Endothelial cell of umbilical vein (primary cell): ENCODE measurements at regions of chr5 and their contacts with region 1.

Region 1: GRCh38 chr5:14035859-14036440 is 91.5 kb upstream of the DNAH5 start:
- DNase-seq: peak; percentile 96
- H3K4me3 ChIP-seq: peak overlapping the region in 1 of 3 experiments; percentile 29
- H3K27ac ChIP-seq: peak overlapping the region; percentile 93
- H3K4me1 ChIP-seq: peaks cover 54% of the 10 kb centered on the region
- H3K27me3 ChIP-seq: no peaks in the 10 kb centered on the region
- CTCF ChIP-seq: no peak
- POLR2A ChIP-seq: no peak

Region 2: DNA sequence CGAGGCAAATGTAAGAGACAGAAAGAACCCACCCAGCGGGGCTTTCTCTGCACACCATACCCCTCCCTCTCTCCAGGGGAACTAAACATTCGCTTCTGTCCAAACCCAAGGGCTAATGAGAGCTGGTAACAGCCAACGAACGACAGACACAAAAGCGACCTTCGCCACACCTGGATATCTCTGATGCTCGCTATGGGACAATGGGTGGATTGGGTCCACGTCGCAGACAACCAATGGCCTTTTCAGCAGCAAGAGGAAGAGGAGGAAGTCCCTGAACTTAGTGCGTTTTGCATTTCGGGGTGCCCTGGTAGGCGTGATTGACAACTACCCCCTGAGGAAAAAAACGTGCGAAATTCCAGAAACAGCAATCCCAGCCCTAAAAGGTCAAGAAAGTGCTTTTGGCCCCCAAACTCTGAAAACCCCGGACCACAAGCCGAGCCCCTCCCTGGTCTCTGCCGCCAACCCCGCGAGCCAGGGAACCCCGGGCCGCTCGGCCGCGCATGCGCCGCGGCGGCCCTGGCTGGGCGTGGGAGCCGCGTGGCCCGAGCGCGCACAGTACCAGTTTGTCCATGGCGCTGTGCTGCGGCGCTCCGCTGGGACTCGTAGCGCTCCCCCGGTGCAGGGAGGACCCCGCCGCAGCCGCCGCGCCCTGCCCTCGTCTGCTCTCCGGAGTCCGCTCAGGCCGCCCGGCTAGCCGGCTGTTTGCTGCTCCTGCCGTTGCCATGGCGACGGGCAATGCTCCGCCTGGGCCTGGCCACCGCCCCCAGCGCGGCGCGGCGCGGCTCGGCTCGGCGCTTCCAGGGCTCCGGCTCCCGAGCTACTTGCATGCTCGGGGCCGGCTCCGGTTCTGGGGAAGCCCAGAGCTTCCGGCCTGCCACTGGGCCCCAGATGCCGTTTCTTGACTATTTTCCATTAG is 24.6 kb before region 1 on chr5:
- CTCF ChIA-PET with region 1: interaction called, 11 read pairs
- POLR2A ChIA-PET with region 1: interaction called, 3 read pairs
- dilution Hi-C with region 1: no loop called
- intact Hi-C with region 1: loop called (anchors 1 kb)
- DNase-seq: peak; percentile 89
- H3K4me3 ChIP-seq: peak overlapping the region; percentile 40 to 71 (median 58)
- H3K27ac ChIP-seq: peak overlapping the region; percentile 23
- H3K4me1 ChIP-seq: peaks cover 5% of the 10 kb centered on the region
- H3K27me3 ChIP-seq: no peaks in the 10 kb centered on the region
- CTCF ChIP-seq: no peak
- POLR2A ChIP-seq: no peak

Region 3: DNA sequence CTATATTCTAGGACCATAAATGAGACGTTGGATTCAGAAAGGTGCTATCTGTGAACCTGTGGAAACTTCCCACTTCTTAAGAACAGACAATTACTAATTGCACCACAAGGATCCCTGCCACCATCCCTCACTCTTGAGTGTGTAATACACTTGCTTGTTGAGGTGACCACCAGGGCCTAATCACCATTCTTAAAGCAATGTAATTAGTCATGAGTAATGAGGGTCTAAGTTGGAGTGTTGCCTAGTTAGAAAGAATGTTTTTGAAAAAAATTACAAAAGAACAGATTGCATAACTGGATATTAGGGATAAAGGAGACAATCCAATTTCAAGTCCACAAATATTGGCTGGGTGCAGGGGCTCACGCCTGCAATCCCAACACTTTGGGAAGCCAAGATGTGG is 50.3 kb after region 1 on chr5:
- CTCF ChIA-PET with region 1: no interaction called
- POLR2A ChIA-PET with region 1: no interaction called
- dilution Hi-C with region 1: no loop called
- intact Hi-C with region 1: no loop called
- DNase-seq: no peak
- H3K4me3 ChIP-seq: no peak overlapping the region
- H3K27ac ChIP-seq: no peak overlapping the region
- H3K4me1 ChIP-seq: no peaks in the 10 kb centered on the region
- H3K27me3 ChIP-seq: peaks cover 7 to 21% of the 10 kb centered on the region in 2 experiments
- CTCF ChIP-seq: no peak
- POLR2A ChIP-seq: no peak

Region 4: DNA sequence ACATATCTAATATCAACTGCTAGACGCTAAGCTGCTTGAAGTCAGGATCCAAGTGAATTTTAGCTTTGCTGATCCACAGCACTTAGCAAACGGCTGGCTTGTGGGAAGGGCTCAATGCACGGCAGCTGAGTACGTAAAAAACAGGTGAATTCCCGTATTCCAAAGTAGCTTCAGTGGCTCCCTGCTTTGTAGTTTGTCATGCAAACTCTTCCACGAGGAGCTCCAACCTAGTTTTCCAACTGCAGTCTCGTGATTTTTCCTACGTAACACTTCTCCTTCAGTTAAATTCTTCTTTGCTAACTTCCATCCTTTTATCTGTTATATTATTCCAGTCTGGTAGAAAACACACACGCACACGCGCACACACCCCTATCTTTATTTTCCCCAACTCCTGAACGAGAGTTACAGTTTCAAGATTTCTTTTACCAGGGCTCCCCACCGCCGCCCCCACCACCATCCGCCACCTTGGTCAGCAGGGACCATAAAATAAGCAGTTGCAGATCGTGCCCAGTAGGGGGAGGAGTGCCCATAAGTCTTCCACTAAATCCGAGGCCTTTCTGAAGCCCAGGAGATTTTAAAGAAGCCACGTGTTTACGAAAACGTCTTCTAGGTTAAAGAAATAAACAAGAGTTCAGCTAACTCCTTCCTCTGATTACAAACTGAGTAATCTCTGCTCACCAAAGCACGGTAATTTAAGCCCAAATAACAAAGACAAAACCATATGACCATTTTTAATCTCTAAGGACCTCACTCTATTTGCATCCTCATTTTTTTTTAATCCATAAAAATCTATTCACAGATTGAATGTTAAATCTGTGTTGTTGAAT is 72.4 kb after region 1 on chr5:
- CTCF ChIA-PET with region 1: interaction called, 3 read pairs
- POLR2A ChIA-PET with region 1: no interaction called
- dilution Hi-C with region 1: no loop called
- intact Hi-C with region 1: loop called (anchors 1 kb)
- DNase-seq: peak; percentile 77
- H3K4me3 ChIP-seq: peak overlapping the region in 2 of 3 experiments; percentile 5
- H3K27ac ChIP-seq: no peak overlapping the region
- H3K4me1 ChIP-seq: peaks cover 30% of the 10 kb centered on the region
- H3K27me3 ChIP-seq: no peaks in the 10 kb centered on the region
- CTCF ChIP-seq: peak; percentile 62 to 82
- POLR2A ChIP-seq: no peak

Region 5: DNA sequence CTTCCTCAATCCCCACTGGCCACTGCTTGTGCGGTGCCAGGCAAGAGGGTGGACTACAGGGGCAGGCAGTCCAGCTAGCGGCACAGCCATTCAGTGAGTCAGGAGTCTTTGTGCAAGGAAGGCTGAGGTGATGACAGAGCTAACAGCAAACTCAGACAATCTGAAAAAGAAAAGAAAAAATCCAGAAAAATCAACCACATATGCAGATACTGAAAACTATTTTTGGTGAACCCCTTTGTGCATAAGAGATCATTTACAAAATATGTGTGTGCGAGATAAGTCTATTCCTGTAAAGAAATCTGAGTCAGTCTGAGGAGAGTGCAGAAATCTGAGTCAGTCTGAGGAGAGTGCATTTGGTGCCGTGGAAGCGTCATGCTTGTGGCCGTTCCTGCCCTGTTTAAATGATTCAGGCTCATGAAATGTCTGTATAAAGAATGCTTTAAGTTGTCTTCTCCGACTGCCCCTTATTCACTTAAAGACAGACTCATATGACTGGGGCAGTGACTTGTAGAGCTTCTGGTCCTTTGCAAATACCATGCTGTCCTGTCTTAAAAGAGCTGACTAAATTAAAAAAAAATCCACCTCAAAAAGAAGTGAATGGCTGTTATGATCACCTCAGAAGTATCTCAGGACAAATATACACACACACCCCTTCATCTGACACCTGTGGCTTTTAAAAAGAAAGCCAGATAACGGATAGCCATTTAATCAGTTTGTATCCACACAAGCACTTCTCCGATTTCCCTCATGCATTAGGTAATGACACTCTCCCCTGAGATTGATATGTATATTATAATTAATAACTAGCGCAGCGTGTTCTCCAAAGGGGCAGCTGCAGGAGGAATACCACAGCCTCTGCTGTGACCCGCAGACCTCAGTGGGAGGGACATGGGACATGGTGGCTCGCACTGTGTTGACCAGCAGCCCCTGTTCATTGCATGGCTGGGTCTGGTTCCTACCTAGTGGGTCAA is 154.5 kb after region 1 on chr5:
- CTCF ChIA-PET with region 1: no interaction called
- POLR2A ChIA-PET with region 1: no interaction called
- dilution Hi-C with region 1: no loop called
- intact Hi-C with region 1: loop called (anchors 5 kb)
- DNase-seq: peak; percentile 93
- H3K4me3 ChIP-seq: no peak overlapping the region
- H3K27ac ChIP-seq: peak overlapping the region; percentile 74
- H3K4me1 ChIP-seq: peaks cover 86% of the 10 kb centered on the region
- H3K27me3 ChIP-seq: no peaks in the 10 kb centered on the region
- CTCF ChIP-seq: no peak
- POLR2A ChIP-seq: no peak

Region 6: GRCh38 chr5:14223372-14223771 is 187.4 kb after region 1 on chr5:
- CTCF ChIA-PET with region 1: no interaction called
- POLR2A ChIA-PET with region 1: no interaction called
- dilution Hi-C with region 1: no loop called
- intact Hi-C with region 1: loop called (anchors 2 kb)
- DNase-seq: peak; percentile 68
- H3K4me3 ChIP-seq: no peak overlapping the region
- H3K27ac ChIP-seq: peak overlapping the region; percentile 36
- H3K4me1 ChIP-seq: peaks cover 55% of the 10 kb centered on the region
- H3K27me3 ChIP-seq: no peaks in the 10 kb centered on the region
- CTCF ChIP-seq: no peak
- POLR2A ChIP-seq: peak; percentile 53